ENCODE measurements at regions of chr17 and their contacts with region 1.

Region 1: DNA sequence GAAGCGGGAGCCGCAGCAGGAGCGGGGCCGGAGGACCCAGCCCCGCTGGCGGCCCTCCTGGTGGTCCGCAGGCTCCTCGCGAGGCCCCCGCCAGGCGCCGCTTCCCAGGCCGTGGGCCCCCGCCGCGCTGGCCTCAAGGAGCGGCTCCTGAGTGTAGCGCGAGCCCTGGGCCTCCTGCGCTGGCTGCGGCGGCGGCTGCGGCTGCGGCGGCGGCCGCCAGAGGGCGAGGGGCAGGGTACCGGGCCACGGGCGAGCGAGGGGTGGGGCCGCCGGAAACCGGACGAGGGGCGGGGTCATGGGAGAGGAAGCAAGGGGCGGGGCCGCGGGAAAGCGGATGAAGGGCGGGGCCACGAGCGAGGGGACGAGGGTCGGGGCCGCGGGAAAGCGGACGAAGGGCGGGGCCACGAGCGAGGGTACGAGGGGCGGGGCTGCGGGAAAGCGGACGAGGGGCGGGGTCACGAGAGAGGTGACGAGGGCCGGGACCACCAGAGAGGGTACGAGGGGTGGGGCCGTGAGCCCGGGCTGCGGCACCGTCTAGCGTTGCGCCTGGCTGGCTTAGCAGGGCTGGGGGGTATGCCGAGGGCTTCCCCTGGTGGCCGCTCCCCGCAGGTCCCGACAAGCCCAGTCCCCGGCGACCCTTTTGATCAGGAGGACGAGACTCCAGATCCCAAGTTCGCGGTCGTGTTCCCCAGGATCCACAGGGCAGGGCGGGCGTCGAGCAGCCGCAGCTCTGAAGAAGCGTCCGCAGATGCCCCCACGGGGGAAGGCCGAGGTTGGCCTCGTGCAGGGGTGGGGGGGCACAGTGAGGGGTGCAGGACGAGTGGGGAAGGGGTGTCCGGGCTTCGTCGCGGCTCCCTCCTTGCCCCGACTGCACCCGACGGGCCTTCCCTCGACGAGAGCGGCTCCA is 1.7 kb downstream of the MYO15B start:
- DNase-seq: peak; percentile 94 to 99 (median 98)
- H3K4me3 ChIP-seq: peak overlapping the region; percentile 74
- H3K27ac ChIP-seq: peak overlapping the region; percentile 93 to 98
- H3K4me1 ChIP-seq: peaks cover 6% of the 10 kb centered on the region
- H3K27me3 ChIP-seq: no peaks in the 10 kb centered on the region
- CTCF ChIP-seq: peak in 2 of 3 donors; percentile 87 to 97
- EP300 ChIP-seq: no peak
- POLR2A ChIP-seq: peak; percentile 90

Region 2: GRCh38 chr17:75515496-75516254 is 73.6 kb before region 1 on chr17 and contains the start of gene CASKIN2:
- intact Hi-C with region 1: loop called in 2 of 4 experiments (anchors 1 to 5 kb)
- DNase-seq: peak; percentile 98 to 99 (median 99)
- H3K4me3 ChIP-seq: peak within 1 kb of the TSS; percentile 94
- H3K27ac ChIP-seq: peak within 1 kb of the TSS; percentile 69 to 79
- H3K4me1 ChIP-seq: peaks cover 23% of the 10 kb centered on the region
- H3K27me3 ChIP-seq: no peaks in the 10 kb centered on the region
- CTCF ChIP-seq: peak; percentile 93 to 99 (median 98)
- EP300 ChIP-seq: no peak
- POLR2A ChIP-seq: peak; percentile 12
- total RNA-seq, gene CASKIN2: 9.1 to 58.7 (median 41.3) TPM

Region 3: DNA sequence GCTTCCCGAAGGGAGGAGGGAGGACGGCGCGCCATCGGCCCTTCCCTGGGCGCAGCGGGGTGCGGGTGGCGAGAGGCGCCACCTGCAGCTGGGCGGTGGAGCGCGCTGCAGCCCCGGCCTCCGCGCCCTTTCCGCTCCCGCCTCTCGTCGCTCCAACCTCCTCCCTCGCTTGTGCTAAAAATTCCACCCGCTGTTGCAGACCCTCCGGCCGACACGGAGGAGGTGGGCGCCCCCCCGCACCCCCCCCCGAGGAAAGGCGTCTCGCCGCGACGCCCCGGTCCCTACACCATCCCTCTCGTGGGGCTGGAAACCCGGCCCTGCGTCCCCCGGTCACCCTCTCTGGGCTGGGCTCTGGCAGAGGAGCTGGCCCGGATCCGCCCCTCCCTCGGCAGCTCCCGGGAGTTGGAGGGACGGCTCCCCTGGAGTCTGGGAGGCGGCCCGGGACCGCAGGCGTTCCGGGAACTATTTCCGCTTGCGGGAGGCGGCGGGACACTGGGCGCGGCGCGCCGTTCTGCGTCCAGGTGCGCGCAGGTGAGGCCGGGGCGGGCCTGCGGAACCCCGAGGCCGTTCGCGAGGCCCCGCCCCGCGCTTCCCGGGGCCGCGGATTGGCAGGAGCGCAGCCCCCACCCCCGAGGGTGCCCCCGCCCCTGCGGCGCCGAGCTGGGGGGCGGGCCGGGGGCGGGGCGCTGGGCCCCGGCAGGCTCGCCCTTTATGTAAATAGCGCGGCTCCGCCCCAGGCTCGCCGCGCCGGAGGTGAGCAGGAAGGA is 64.1 kb before region 1 on chr17 and contains the start of gene LLGL2:
- intact Hi-C with region 1: loop called in 1 of 4 experiments (anchors 5 kb)
- DNase-seq: peak; percentile 70 to 82 (median 77)
- H3K4me3 ChIP-seq: peak within 1 kb of the TSS; percentile 75
- H3K27ac ChIP-seq: peak within 1 kb of the TSS in 1 of 2 donors; percentile 71
- H3K4me1 ChIP-seq: no peaks in the 10 kb centered on the region
- H3K27me3 ChIP-seq: no peaks in the 10 kb centered on the region
- CTCF ChIP-seq: peak; percentile 24 to 43 (median 33)
- EP300 ChIP-seq: no peak
- POLR2A ChIP-seq: peak; percentile 29
- total RNA-seq, gene LLGL2: 9.9 to 45.4 (median 17.2) TPM

Region 4: DNA sequence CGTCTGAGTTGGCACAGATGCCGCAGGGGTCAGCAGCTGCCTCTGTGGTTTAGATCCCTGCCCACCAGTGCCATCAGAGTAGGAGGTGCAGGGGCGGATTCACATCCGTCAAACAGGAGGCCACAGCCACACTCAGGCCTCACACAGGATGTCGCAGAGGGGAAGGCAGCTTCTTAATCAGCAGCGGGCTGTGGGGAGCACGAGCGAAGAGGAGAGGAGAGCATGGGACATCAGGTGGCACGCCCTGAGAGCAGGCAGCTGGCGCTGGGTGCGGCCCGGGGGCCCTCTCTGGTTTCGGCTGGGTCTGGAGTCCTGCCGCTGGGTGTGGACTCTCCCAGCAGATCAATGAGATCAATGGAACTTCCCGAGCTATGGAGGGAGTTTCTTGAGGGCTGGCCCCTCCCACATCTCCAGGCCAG is 54.1 kb before region 1 on chr17:
- intact Hi-C with region 1: loop called in 1 of 4 experiments (anchors 5 kb)
- DNase-seq: no peak
- H3K4me3 ChIP-seq: no peak overlapping the region
- H3K27ac ChIP-seq: no peak overlapping the region
- H3K4me1 ChIP-seq: no peaks in the 10 kb centered on the region
- H3K27me3 ChIP-seq: no peaks in the 10 kb centered on the region
- CTCF ChIP-seq: no peak
- EP300 ChIP-seq: no peak
- POLR2A ChIP-seq: no peak

Region 5: DNA sequence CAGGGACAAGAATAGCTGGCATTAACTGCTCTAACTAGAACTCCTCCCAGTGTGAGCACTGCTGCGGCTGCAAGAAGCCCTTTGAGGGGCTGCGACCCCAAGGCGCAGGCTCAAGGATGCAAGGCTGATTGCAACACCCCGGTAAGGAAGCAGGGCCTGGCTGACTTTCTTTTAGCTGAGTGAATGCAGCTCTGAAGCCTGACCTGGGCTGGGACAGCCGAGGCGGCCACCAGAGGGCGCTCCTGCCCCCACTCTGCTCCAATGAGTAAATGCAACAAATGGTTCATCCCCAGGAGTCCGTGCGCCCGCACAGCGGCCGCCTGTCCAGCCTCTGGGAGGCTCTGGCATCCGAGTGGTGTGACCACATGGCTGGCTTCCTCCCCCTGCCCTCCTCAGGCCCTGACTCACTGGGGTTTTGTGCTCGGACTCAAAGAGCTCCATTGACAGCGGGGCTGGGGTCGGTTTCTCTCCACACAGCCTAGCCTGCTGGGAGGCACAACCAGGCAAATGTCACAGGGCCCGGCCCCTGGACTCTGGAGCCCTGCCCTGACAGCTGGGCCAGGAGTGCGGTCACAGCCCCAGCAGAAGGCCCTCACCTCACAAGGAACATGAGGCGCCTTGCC is 43.7 kb after region 1 on chr17 and contains the start of gene SMIM5:
- intact Hi-C with region 1: loop called in 1 of 4 experiments (anchors 2 kb)
- DNase-seq: peak; percentile 90 to 92 (median 91)
- H3K4me3 ChIP-seq: peak within 1 kb of the TSS; percentile 1
- H3K27ac ChIP-seq: peak within 1 kb of the TSS; percentile 49 to 80
- H3K4me1 ChIP-seq: peaks cover 12% of the 10 kb centered on the region
- H3K27me3 ChIP-seq: no peaks in the 10 kb centered on the region
- CTCF ChIP-seq: peak; percentile 84 to 98 (median 85)
- EP300 ChIP-seq: no peak
- POLR2A ChIP-seq: no peak
- total RNA-seq, gene SMIM5: 0.51 to 7.9 (median 1.7) TPM

Region 6: DNA sequence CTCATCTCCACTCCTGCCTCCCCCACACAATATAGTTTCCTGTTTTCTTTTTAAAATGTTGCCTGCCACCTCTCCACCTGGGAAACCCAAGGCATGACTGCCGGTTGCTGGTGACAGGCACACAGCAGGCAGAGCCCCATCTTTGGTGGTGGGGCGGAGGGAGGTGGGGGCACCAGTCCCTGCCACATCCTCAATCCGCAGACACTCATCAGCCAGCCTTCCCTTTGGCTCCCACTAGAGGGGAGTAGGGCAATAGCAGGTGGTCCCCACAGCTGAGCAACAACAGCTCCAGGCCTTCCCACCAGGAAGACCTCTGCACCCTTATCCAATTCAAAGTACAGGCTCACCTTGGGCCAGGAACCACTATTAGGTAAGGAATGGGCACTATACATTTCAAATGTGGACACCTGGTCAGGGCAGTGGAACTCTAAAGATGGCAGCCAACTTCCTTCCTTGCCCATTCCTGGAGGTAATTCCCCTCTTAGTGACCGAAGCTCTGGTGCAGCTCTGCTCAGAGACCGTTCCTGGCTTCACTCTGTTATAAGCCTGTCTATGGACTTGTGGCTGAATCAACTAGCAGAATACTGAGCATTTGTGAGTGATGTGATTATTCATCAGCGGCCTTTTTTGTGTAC is 63.8 kb after region 1 on chr17:
- intact Hi-C with region 1: no loop called
- DNase-seq: peak in 1 of 5 donors; percentile 36
- H3K4me3 ChIP-seq: no peak overlapping the region
- H3K27ac ChIP-seq: no peak overlapping the region
- H3K4me1 ChIP-seq: no peaks in the 10 kb centered on the region
- H3K27me3 ChIP-seq: no peaks in the 10 kb centered on the region
- CTCF ChIP-seq: no peak
- EP300 ChIP-seq: no peak
- POLR2A ChIP-seq: no peak